ENCODE measurements at regions of chr3 and their contacts with region 1.

Region 1: GRCh38 chr3:151660885-151661284 is 72.8 kb upstream of the AADACL2 start:
- DNase-seq: no peak
- H3K4me3 ChIP-seq: no peak overlapping the region
- H3K27ac ChIP-seq: no peak overlapping the region
- H3K27me3 ChIP-seq: no peaks in the 10 kb centered on the region
- CTCF ChIP-seq: no peak

Region 2: GRCh38 chr3:151439652-151440129 is 221.2 kb before region 1 on chr3:
- in situ Hi-C with region 1: loop called (anchors 25 kb)
- DNase-seq: peak; percentile 71
- H3K4me3 ChIP-seq: no peak overlapping the region
- H3K27ac ChIP-seq: no peak overlapping the region
- H3K27me3 ChIP-seq: no peaks in the 10 kb centered on the region
- CTCF ChIP-seq: peak; percentile 76

Region 3: GRCh38 chr3:151816091-151816604 is 155.3 kb after region 1 on chr3:
- in situ Hi-C with region 1: no loop called
- DNase-seq: peak; percentile 68
- H3K4me3 ChIP-seq: no peak overlapping the region
- H3K27ac ChIP-seq: no peak overlapping the region
- H3K27me3 ChIP-seq: no peaks in the 10 kb centered on the region
- CTCF ChIP-seq: no peak

Measured in brain microvascular endothelial cell (primary cell).